Activated CD4-positive, alpha-beta T cell treated with anti-CD3 and anti-CD28 coated beads for 36 hours (primary cell): ENCODE measurements at regions of chr11 and their contacts with region 1.

Region 1: GRCh38 chr11:19240420-19241259 is at the start of gene E2F8:
- DNase-seq: peak; percentile 94
- ATAC-seq: peak; percentile 82
- H3K4me3 Mint-ChIP-seq: peak within 1 kb of the TSS; percentile 89
- H3K27ac Mint-ChIP-seq: peak within 1 kb of the TSS; percentile 60
- H3K4me1 Mint-ChIP-seq: peaks cover 14% of the 10 kb centered on the region
- H3K27me3 Mint-ChIP-seq: peaks cover 31% of the 10 kb centered on the region
- total RNA-seq, gene E2F8: 18.0 to 22.2 TPM

Region 2: DNA sequence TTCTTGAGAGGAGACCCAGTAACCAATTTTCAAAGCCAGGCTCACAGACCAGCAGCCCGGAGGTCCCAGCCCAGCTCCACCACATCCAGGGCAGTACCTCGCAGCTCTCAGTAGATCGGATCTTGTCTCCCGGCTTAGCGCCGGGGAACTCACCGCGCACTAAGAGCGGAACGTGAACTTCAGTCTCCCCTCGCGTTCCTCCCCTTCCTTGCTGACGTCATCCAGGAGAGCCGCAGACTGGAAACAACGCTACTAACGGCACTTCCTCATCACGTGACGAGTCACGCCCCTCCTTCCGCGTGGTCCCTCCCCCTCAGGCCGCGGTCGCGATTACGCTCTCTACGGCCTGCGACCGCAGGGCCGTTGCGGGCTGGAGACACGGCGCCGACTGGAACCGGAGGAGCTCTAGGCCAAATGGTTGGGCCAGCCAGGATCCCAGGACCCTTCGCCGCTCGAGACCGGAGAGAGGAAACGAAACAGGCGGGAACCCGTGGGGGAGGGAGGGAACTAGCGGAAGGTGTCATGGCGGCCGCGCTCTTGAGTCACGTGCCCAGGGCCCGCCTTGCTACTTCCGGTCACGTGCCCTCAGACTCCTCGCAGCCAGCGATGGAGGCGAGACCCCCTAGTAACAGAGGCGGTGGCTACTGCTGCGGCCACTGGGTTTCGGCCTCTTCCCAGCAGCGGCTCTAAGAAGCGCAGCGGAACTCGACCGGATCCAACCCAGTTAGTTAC is 918.5 kb before region 1 on chr11 and contains the starts of genes GTF2H1 and HPS5:
- CTCF ChIA-PET with region 1: no interaction called
- POLR2A ChIA-PET with region 1: no interaction called
- intact Hi-C with region 1: loop called in 1 of 2 experiments (anchors 2 kb)
- DNase-seq: peak; percentile 97
- ATAC-seq: peak; percentile 89
- H3K4me3 Mint-ChIP-seq: peak within 1 kb of the TSS; percentile 92
- H3K27ac Mint-ChIP-seq: peak within 1 kb of the TSS; percentile 100
- H3K4me1 Mint-ChIP-seq: peaks cover 59% of the 10 kb centered on the region
- H3K27me3 Mint-ChIP-seq: no peaks in the 10 kb centered on the region
- total RNA-seq, gene GTF2H1: 48.2 to 57.9 TPM
- total RNA-seq, gene HPS5: 14.3 to 16.1 TPM

Region 3: DNA sequence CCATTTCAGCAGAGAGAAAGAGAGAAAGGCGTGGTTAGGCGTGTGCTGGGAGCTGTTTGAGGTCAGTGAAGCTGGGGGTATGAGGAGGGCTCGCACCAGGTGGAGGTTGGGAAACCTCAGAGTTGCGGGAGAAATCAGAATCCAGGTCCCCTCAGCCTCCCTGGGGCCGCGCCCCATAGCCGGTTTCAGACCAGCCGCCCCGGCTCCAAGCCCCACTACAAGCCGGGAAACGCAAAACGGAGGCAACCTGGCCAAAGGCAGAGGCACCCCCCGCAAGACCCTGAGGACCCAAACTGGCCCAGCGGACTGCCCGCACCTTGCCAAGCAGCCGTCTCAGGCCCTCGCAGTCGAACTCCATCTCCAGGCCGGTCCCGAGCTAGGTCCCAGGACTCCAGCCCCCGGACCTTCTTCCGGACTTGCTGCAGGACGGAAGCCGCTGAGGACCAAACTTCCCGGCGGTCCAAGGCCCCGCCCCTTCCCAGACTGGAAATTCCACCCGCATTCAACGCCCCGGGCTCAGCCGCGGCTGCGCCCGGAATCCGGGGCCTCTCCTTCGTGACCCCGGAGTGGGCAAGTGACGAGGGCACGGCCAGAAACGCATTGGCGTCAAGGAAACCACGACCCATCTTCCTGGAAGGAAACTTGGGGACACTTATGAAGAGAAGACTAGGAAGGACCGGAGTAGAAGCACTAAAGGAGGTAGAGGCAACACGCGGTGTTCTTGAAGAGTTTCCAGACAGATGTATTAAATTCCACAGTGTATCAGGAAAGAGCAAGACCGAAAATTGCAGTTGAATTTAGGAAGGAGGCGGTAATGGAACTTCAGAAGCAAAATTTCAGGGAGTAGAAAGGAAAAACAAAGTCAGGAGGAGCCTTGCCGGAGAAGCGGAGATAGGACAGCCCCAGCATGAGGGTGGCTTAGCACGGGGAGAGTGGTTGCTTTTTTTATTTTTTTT is 652.1 kb before region 1 on chr11 and contains the start of gene UEVLD:
- CTCF ChIA-PET with region 1: no interaction called
- POLR2A ChIA-PET with region 1: no interaction called
- intact Hi-C with region 1: loop called in 1 of 2 experiments (anchors 5 kb)
- DNase-seq: peak; percentile 79
- ATAC-seq: peak; percentile 54
- H3K4me3 Mint-ChIP-seq: no peak within 1 kb of the TSS
- H3K27ac Mint-ChIP-seq: no peak within 1 kb of the TSS
- H3K4me1 Mint-ChIP-seq: peaks cover 12% of the 10 kb centered on the region
- H3K27me3 Mint-ChIP-seq: no peaks in the 10 kb centered on the region
- total RNA-seq, gene UEVLD: 14.3 to 16.0 TPM

Region 4: DNA sequence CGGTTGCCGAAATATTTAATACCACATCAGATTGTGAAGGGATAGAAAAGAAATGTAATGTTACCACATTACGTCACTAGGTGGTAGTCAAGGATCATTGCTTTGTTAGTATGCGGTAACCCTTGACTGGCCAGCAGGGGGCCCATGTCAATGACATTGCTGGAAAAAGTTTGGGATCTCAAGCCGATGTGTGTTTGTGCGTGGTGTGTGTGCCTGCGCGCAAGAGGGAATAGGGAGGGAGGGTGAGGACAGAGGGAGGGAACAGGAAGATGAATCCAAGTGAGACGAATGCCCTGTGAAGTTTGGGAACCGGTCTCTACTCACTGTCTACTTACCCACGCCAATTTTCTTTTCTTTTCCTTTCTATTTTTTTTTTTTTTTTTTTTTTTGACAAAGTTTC is 169.4 kb before region 1 on chr11:
- CTCF ChIA-PET with region 1: no interaction called
- POLR2A ChIA-PET with region 1: no interaction called
- intact Hi-C with region 1: loop called (anchors 5 kb)
- DNase-seq: peak; percentile 77
- ATAC-seq: peak; percentile 93
- H3K4me3 Mint-ChIP-seq: peak overlapping the region; percentile 38
- H3K27ac Mint-ChIP-seq: no peak overlapping the region
- H3K4me1 Mint-ChIP-seq: peaks cover 4% of the 10 kb centered on the region
- H3K27me3 Mint-ChIP-seq: peaks cover 20% of the 10 kb centered on the region

Region 5: GRCh38 chr11:19301361-19301760 is 60.7 kb after region 1 on chr11:
- CTCF ChIA-PET with region 1: no interaction called
- POLR2A ChIA-PET with region 1: no interaction called
- intact Hi-C with region 1: no loop called
- DNase-seq: no peak
- ATAC-seq: no peak
- H3K4me3 Mint-ChIP-seq: no peak overlapping the region
- H3K27ac Mint-ChIP-seq: no peak overlapping the region
- H3K4me1 Mint-ChIP-seq: no peaks in the 10 kb centered on the region
- H3K27me3 Mint-ChIP-seq: peaks cover 20% of the 10 kb centered on the region

Region 6: DNA sequence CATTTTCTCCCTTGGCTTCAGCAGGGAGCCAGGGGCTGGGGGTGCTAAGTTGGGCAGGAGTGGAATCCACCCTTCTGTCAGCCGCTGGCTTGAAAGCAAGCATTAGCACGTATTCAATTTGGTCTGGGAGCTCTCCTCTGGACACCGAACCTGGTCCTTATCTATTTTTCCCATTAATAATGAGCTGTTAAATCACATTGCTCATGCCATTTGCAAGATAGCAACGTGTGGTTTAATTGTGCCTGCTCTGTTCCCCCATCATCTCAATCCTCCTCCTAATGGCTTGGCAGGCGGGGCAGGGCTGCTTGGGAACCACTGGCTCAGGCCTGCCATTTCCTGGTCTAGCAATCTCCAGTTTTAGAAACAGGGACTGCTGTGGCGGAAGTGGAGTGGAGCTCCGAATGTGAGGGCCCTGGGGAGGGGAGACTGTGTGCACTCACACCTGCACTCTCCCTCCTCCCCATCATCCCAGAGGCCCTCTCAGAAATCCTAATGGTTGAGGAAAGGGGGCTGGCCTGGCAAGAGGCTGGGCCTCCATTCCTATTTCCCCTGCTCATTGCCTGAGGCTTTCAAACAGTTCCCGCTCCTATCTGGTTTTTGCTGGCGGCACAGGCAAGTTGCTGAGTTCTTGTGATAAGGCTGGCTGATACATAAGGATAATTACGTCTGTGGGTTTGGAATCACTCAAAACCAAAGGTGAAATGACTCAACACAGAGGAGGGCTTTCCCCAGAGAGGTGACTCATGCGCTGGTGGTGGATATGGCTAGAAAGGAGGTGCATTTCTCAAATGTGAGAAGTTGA is 201.3 kb after region 1 on chr11:
- CTCF ChIA-PET with region 1: no interaction called
- POLR2A ChIA-PET with region 1: no interaction called
- intact Hi-C with region 1: loop called (anchors 1 to 10 kb)
- DNase-seq: peak; percentile 84
- ATAC-seq: peak; percentile 88
- H3K4me3 Mint-ChIP-seq: no peak overlapping the region
- H3K27ac Mint-ChIP-seq: peak overlapping the region; percentile 29
- H3K4me1 Mint-ChIP-seq: peaks cover 19% of the 10 kb centered on the region
- H3K27me3 Mint-ChIP-seq: peaks cover 57% of the 10 kb centered on the region

Region 7: DNA sequence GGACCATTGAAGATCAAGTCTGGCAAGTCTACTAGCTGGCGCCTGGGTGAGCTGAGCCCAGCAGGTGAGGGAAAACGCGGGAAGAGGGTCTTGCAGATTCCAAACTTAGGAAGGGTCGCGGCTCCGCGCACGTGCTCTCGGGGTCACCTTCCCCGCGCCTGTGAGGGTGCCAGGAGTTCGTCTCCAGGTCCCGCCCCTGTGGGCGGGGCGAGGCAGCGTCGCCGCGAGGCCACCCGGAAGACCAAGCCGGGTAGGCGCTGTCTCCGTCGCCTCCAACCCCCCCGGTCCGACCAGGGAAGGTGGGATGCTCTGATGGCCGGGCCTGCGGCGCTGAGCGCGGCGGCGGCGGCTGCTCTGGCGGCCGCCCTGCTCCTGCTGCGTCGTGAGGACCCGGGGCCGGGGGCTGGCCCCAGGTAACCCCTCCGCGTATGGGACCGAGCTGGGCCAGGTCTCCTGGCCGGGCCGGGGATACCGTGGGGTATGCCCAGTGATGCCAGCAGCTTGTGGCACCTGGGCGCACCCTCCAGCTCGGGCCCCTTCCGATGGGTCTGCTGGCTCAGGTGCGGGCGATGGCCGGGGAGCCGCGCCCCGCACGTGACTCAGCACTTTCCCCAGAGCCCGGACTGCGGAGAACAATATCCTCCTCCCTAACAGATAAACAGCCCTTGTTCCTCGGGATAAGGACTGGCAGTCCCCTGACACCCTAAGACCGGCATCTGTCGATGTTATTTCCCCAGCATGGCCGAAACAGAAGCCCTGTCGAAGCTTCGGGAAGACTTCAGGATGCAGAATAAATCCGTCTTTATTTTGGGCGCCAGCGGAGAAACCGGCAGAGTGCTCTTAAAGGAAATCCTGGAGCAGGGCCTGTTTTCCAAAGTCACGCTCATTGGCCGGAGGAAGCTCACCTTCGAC is 1123.1 kb after region 1 on chr11 and contains the start of gene HTATIP2:
- CTCF ChIA-PET with region 1: no interaction called
- POLR2A ChIA-PET with region 1: no interaction called
- intact Hi-C with region 1: loop called in 1 of 2 experiments (anchors 2 kb)
- DNase-seq: peak; percentile 82
- ATAC-seq: peak; percentile 79
- H3K4me3 Mint-ChIP-seq: peak within 1 kb of the TSS; percentile 76
- H3K27ac Mint-ChIP-seq: peak within 1 kb of the TSS; percentile 92
- H3K4me1 Mint-ChIP-seq: peaks cover 68% of the 10 kb centered on the region
- H3K27me3 Mint-ChIP-seq: no peaks in the 10 kb centered on the region
- total RNA-seq, gene HTATIP2: 41.4 to 60.4 TPM